Aorta (tissue), 5 donors: ENCODE measurements at regions of chr1 and their contacts with region 1.

Region 1: GRCh38 chr1:27725374-27726173 is at the start of gene FAM76A:
- DNase-seq: peak; percentile 99 to 100
- ATAC-seq: peak; percentile 100
- H3K4me3 ChIP-seq: peak within 1 kb of the TSS; percentile 60 to 61
- H3K27ac ChIP-seq: peak within 1 kb of the TSS in 1 of 2 donors; percentile 83
- H3K4me1 ChIP-seq: no peaks in the 10 kb centered on the region
- H3K27me3 ChIP-seq: no peaks in the 10 kb centered on the region
- total RNA-seq, gene FAM76A: 14.4 to 18.9 TPM

Region 2: GRCh38 chr1:27658951-27659496 is 66.5 kb before region 1 on chr1:
- intact Hi-C with region 1: no loop called
- DNase-seq: peak in 1 of 2 donors; percentile 80
- ATAC-seq: peak; percentile 20
- H3K4me3 ChIP-seq: no peak overlapping the region
- H3K27ac ChIP-seq: peak overlapping the region; percentile 15 to 55
- H3K4me1 ChIP-seq: no peaks in the 10 kb centered on the region
- H3K27me3 ChIP-seq: no peaks in the 10 kb centered on the region

Region 3: DNA sequence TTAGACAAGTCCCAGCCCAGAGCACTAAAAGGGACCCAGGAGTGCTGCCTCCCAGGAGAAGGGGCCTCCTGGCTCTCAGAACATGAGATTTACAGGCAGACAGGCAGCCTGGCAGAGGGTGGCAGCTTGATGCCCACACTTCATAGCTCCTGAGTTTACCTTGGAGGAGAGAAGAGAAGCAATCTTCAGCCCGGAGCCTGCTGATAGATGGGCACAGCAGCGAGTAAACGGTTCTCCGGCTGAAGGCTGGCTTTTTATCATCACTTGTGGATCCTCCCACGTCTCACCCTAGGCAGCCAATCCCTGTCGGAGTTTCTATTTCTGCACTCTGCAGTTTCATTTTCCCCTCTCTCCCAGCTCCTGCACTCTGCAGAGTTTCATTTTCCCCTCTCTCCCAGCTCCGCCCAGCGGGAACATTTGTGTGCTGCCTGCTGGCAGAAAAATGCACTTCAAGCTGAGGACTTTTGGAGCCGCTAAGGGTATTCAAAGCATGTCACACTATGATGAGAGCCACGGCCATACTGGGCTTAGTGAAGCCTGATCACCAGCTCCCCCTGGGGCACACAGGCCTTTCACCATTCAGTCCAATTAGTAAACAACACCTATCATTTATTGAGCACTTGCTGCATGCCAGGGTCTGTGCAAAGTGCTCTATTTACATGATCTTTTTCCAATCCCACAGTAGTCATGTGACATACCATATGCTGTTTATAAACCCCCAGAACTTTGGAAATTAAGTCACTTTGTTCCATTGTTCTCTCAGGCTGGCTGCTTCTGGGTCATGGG is 53.4 kb before region 1 on chr1 and contains the start of gene IFI6:
- intact Hi-C with region 1: loop called in 1 of 2 experiments (anchors 2 kb)
- DNase-seq: peak; percentile 92 to 93
- ATAC-seq: peak; percentile 98
- H3K4me3 ChIP-seq: peak within 1 kb of the TSS; percentile 32 to 72
- H3K27ac ChIP-seq: peak within 1 kb of the TSS; percentile 69 to 96
- H3K4me1 ChIP-seq: peaks cover 0 to 4% of the 10 kb centered on the region in 2 donors
- H3K27me3 ChIP-seq: no peaks in the 10 kb centered on the region
- total RNA-seq, gene IFI6: 116 to 143 TPM

Region 4: DNA sequence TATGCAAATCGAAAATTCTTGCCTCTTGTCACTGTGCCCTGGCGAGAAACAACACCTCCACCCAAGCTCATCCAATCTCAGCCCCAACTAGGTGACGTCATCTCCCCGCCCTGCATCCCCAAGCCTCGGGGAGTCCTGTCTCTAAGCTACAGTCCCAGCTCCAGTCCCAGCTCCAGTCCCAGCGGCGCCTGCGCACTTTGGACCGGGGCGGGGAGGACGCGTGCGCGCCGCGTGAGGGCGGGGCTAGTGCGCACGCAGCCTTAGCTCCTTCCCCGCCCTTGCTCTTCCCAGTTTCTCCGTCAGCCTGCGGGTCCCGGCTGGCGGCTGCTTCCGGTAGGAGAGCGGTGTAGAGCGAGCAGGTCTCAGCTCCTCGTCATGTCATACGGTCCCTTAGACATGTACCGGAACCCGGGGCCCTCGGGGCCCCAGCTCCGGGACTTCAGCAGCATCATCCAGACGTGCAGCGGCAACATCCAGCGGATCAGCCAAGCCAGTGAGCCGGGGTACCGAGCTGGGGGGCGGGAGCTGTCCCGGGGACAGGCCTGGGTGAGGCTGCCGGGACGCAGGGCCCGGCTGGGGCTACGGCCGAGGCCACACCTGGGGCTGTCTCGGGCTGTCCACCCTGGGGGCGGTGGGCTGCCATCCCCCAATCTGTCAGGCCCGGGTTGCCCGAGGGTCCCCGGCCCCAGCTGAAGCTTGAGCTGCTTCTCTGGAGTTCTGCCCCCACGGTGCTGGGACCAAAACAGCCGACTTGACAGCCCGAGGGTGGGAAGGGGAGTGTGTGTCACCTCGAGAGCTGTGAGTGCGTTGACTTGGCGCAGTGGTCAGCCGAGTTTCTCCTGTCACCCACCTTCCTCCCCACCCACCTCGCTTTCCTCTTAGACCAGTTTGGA is 47.6 kb after region 1 on chr1 and contains the start of gene STX12:
- intact Hi-C with region 1: loop called (anchors 2 kb)
- DNase-seq: peak; percentile 99
- ATAC-seq: peak; percentile 99
- H3K4me3 ChIP-seq: peak within 1 kb of the TSS; percentile 67 to 80
- H3K27ac ChIP-seq: peak within 1 kb of the TSS; percentile 83 to 95
- H3K4me1 ChIP-seq: peaks cover 0 to 5% of the 10 kb centered on the region in 2 donors
- H3K27me3 ChIP-seq: no peaks in the 10 kb centered on the region
- total RNA-seq, gene STX12: 70.0 to 81.4 TPM

Region 5: DNA sequence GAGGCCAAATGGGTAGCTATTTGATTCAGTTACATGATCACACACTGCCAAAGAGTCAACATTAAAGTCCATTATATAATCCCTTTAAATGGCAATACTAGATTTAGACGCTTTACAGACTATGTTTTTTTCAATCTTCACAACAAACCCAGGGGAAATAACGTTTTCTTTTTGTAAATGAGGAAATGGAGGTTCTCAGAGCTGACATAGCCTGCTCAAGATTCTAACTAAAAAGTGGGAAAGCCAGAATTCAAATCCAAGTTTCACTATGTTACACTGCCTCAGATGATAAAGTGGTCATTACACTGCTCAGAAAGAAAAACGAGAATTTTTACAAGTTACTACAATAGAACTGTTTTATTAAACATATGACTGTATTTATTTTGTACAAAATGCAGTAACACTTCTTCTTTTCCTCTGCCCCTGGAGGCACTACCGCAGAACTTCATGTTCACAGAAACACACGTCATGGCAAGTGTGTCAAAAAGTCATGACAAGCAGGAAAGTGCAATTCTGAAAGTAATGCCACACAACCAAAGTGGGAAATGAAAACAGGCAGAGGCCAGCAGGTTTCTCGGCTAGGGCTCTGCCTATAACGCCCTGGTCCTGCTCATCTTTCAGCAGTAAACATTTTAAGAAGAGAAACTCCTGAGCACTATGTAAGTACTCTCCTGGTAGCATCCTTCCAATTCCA is 165.8 kb after region 1 on chr1:
- intact Hi-C with region 1: no loop called
- DNase-seq: no peak
- ATAC-seq: peak; percentile 27
- H3K4me3 ChIP-seq: no peak overlapping the region
- H3K27ac ChIP-seq: no peak overlapping the region
- H3K4me1 ChIP-seq: no peaks in the 10 kb centered on the region
- H3K27me3 ChIP-seq: no peaks in the 10 kb centered on the region